ENCODE measurements at regions of chr17 and their contacts with region 1.

Region 1: GRCh38 chr17:80871341-80871740 is 120.3 kb upstream of the CHMP6 start:
- DNase-seq: peak in 3 of 9 donors; percentile 32 to 40 (median 36)
- ATAC-seq: peak; percentile 56
- H3K4me3 ChIP-seq: peak overlapping the region; percentile 39
- H3K4me3 Mint-ChIP-seq: peak overlapping the region; percentile 67 to 81 (median 77)
- H3K27ac ChIP-seq: peak overlapping the region; percentile 29
- H3K27ac Mint-ChIP-seq: peak overlapping the region; percentile 26 to 84 (median 63)
- H3K4me1 ChIP-seq: peaks cover 13 to 39% of the 10 kb centered on the region in 2 donors
- H3K4me1 Mint-ChIP-seq: peaks cover 45 to 84% (median 79%) of the 10 kb centered on the region in 7 donors
- H3K27me3 ChIP-seq: no peaks in the 10 kb centered on the region
- H3K27me3 Mint-ChIP-seq: no peaks in the 10 kb centered on the region

Region 2: DNA sequence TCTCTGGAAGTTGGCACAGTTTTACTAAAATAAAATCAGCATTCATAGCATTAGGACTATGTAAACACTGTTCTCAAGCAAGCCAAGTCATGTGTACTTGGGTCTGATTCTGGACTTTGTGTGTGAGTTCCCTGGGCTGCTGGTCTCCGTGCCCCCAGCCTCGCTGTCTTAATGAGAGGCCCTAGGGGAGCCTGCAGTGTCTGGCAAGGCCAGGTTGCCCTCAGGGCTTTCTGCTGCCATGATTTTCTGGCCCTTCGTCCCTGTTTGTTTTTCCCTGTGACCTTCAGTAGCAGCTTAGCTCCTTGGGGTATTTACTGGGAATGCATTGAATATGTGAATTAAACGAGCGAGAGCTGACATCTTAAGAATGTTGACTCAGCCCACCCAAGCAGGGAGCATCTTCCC is 164.9 kb before region 1 on chr17:
- CTCF ChIA-PET with region 1: no interaction called
- POLR2A ChIA-PET with region 1: no interaction called
- intact Hi-C with region 1: no loop called
- DNase-seq: no peak
- ATAC-seq: no peak
- H3K4me3 ChIP-seq: no peak overlapping the region
- H3K4me3 Mint-ChIP-seq: peak overlapping the region in 4 of 10 donors; percentile 36 to 53 (median 50)
- H3K27ac ChIP-seq: no peak overlapping the region
- H3K27ac Mint-ChIP-seq: peak overlapping the region in 7 of 9 donors; percentile 38 to 90 (median 69)
- H3K4me1 ChIP-seq: peaks cover 33 to 35% of the 10 kb centered on the region in 2 donors
- H3K4me1 Mint-ChIP-seq: peaks cover 42 to 91% (median 84%) of the 10 kb centered on the region in 7 donors
- H3K27me3 ChIP-seq: no peaks in the 10 kb centered on the region
- H3K27me3 Mint-ChIP-seq: no peaks in the 10 kb centered on the region

Region 3: GRCh38 chr17:80855948-80856862 is 15.1 kb before region 1 on chr17:
- CTCF ChIA-PET with region 1: no interaction called
- POLR2A ChIA-PET with region 1: no interaction called
- intact Hi-C with region 1: loop called in 1 of 2 experiments (anchors 2 kb)
- DNase-seq: peak in 2 of 9 donors; percentile 26 to 80
- ATAC-seq: peak; percentile 92
- H3K4me3 ChIP-seq: no peak overlapping the region
- H3K4me3 Mint-ChIP-seq: peak overlapping the region in 6 of 10 donors; percentile 18 to 71 (median 30)
- H3K27ac ChIP-seq: peak overlapping the region; percentile 19
- H3K27ac Mint-ChIP-seq: peak overlapping the region in 8 of 9 donors; percentile 23 to 95 (median 70)
- H3K4me1 ChIP-seq: peaks cover 10 to 27% of the 10 kb centered on the region in 2 donors
- H3K4me1 Mint-ChIP-seq: peaks cover 23 to 78% (median 55%) of the 10 kb centered on the region in 7 donors
- H3K27me3 ChIP-seq: no peaks in the 10 kb centered on the region
- H3K27me3 Mint-ChIP-seq: no peaks in the 10 kb centered on the region